CD4-positive, alpha-beta memory T cell (primary cell): ENCODE measurements at regions of chr2 and their contacts with region 1.

Region 1: GRCh38 chr2:201451292-201452057 is at the starts of genes STRADB and TRAK2:
- DNase-seq: peak; percentile 93 to 98 (median 95)
- H3K4me3 ChIP-seq: peak within 1 kb of the TSS; percentile 38 to 93
- H3K4me3 Mint-ChIP-seq: peak within 1 kb of the TSS; percentile 94 to 99 (median 98)
- H3K27ac ChIP-seq: peak within 1 kb of the TSS; percentile 74
- H3K27ac Mint-ChIP-seq: peak within 1 kb of the TSS; percentile 95 to 98 (median 97)
- H3K4me1 ChIP-seq: peaks cover 49% of the 10 kb centered on the region
- H3K4me1 Mint-ChIP-seq: peaks cover 29 to 52% (median 41%) of the 10 kb centered on the region in 4 donors
- H3K27me3 ChIP-seq: no peaks in the 10 kb centered on the region
- H3K27me3 Mint-ChIP-seq: no peaks in the 10 kb centered on the region
- total RNA-seq, gene STRADB: 17.3 to 20.9 TPM
- total RNA-seq, gene TRAK2: 46.8 to 47.3 TPM

Region 2: GRCh38 chr2:200509612-200510433 is 941.7 kb before region 1 on chr2 and contains the start of gene KCTD18:
- CTCF ChIA-PET with region 1: no interaction called
- POLR2A ChIA-PET with region 1: no interaction called
- intact Hi-C with region 1: loop called (anchors 10 kb)
- DNase-seq: peak; percentile 85 to 90 (median 87)
- H3K4me3 ChIP-seq: peak within 1 kb of the TSS; percentile 81
- H3K4me3 Mint-ChIP-seq: peak within 1 kb of the TSS; percentile 91 to 98 (median 93)
- H3K27ac ChIP-seq: peak within 1 kb of the TSS; percentile 73
- H3K27ac Mint-ChIP-seq: peak within 1 kb of the TSS; percentile 94 to 98 (median 96)
- H3K4me1 ChIP-seq: peaks cover 29% of the 10 kb centered on the region
- H3K4me1 Mint-ChIP-seq: peaks cover 30 to 43% (median 32%) of the 10 kb centered on the region in 4 donors
- H3K27me3 ChIP-seq: no peaks in the 10 kb centered on the region
- H3K27me3 Mint-ChIP-seq: no peaks in the 10 kb centered on the region
- total RNA-seq, gene KCTD18: 19.2 to 21.1 TPM

Region 3: DNA sequence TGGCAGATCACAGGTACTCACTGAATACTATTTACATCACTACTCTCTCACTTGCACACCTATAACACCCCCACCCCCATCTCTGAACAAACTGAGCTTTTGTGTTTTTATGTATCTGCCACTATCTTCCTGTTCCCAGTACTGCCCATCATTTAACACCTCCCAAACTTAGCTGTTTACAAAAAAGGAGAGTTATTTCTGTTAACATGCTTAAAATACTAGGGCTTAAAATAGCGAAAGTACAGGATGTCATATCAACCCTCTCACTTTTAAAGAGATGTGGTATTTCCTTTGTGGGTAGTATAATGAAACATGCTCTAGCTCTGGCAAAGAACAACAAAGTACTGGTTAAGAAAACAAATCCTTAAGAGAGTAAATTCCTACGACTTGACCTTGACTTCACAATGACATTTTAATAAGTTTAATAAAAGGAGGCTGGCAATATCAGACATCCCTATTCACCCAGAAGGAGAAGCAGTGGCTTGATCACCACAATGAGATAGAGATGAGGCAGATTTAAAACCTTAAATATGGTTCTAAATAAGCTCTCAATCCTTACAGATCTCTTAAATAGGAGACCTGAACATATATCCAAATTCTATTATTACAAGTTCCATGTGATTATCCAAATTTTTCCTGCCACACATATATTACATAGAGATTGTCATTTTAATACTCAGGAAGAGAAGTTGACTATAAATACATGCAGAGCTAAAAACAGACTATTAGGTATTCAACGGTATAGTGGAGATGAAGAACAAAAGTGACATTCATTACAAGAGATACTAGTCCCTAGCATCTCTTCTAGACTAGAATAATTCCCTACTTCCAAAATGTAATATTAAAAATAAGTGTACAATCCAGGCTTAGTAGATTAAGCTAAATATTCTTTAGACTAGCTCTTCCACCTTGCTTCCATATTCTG is 37.1 kb before region 1 on chr2:
- CTCF ChIA-PET with region 1: interaction called, 4 read pairs
- POLR2A ChIA-PET with region 1: interaction called, 40 read pairs
- intact Hi-C with region 1: loop called (anchors 1 kb)
- DNase-seq: peak in 4 of 5 donors; percentile 28 to 43 (median 38)
- H3K4me3 ChIP-seq: peak overlapping the region; percentile 11 to 29
- H3K4me3 Mint-ChIP-seq: no peak overlapping the region
- H3K27ac ChIP-seq: no peak overlapping the region
- H3K27ac Mint-ChIP-seq: no peak overlapping the region
- H3K4me1 ChIP-seq: peaks cover 50% of the 10 kb centered on the region
- H3K4me1 Mint-ChIP-seq: peaks cover 13 to 30% (median 18%) of the 10 kb centered on the region in 4 donors
- H3K27me3 ChIP-seq: no peaks in the 10 kb centered on the region
- H3K27me3 Mint-ChIP-seq: no peaks in the 10 kb centered on the region

Region 4: GRCh38 chr2:201432038-201432620 is 19.3 kb before region 1 on chr2:
- CTCF ChIA-PET with region 1: interaction called, 7 read pairs
- POLR2A ChIA-PET with region 1: interaction called, 154 read pairs
- intact Hi-C with region 1: loop called (anchors 1 kb)
- DNase-seq: peak in 4 of 5 donors; percentile 33 to 46 (median 42)
- H3K4me3 ChIP-seq: no peak overlapping the region
- H3K4me3 Mint-ChIP-seq: peak overlapping the region in 6 of 8 donors; percentile 7 to 83 (median 54)
- H3K27ac ChIP-seq: peak overlapping the region; percentile 42
- H3K27ac Mint-ChIP-seq: peak overlapping the region; percentile 43 to 94 (median 90)
- H3K4me1 ChIP-seq: peaks cover 52% of the 10 kb centered on the region
- H3K4me1 Mint-ChIP-seq: peaks cover 44 to 77% (median 61%) of the 10 kb centered on the region in 4 donors
- H3K27me3 ChIP-seq: no peaks in the 10 kb centered on the region
- H3K27me3 Mint-ChIP-seq: no peaks in the 10 kb centered on the region

Region 5: GRCh38 chr2:201642579-201643215 is 191.2 kb after region 1 on chr2:
- CTCF ChIA-PET with region 1: interaction called, 3 read pairs
- POLR2A ChIA-PET with region 1: interaction called, 29 read pairs
- intact Hi-C with region 1: loop called (anchors 1 kb)
- DNase-seq: peak; percentile 83 to 91 (median 89)
- H3K4me3 ChIP-seq: peak overlapping the region; percentile 92 to 97
- H3K4me3 Mint-ChIP-seq: peak overlapping the region; percentile 89 to 99 (median 96)
- H3K27ac ChIP-seq: peak overlapping the region; percentile 83
- H3K27ac Mint-ChIP-seq: peak overlapping the region; percentile 95 to 100 (median 96)
- H3K4me1 ChIP-seq: no peaks in the 10 kb centered on the region
- H3K4me1 Mint-ChIP-seq: peaks cover 7 to 23% (median 7%) of the 10 kb centered on the region in 4 donors
- H3K27me3 ChIP-seq: no peaks in the 10 kb centered on the region
- H3K27me3 Mint-ChIP-seq: no peaks in the 10 kb centered on the region

Region 6: GRCh38 chr2:202911512-202912341 is 1460.3 kb after region 1 on chr2 and contains the starts of genes CARF and WDR12:
- CTCF ChIA-PET with region 1: no interaction called
- POLR2A ChIA-PET with region 1: no interaction called
- intact Hi-C with region 1: loop called (anchors 5 kb)
- DNase-seq: peak; percentile 92
- H3K4me3 ChIP-seq: peak within 1 kb of the TSS; percentile 94 to 96
- H3K4me3 Mint-ChIP-seq: peak within 1 kb of the TSS; percentile 92 to 99 (median 98)
- H3K27ac ChIP-seq: peak within 1 kb of the TSS; percentile 74
- H3K27ac Mint-ChIP-seq: peak within 1 kb of the TSS; percentile 93 to 99 (median 98)
- H3K4me1 ChIP-seq: peaks cover 15% of the 10 kb centered on the region
- H3K4me1 Mint-ChIP-seq: peaks cover 16 to 48% (median 32%) of the 10 kb centered on the region in 4 donors
- H3K27me3 ChIP-seq: no peaks in the 10 kb centered on the region
- H3K27me3 Mint-ChIP-seq: no peaks in the 10 kb centered on the region
- total RNA-seq, gene CARF: 24.4 to 27.6 TPM
- total RNA-seq, gene WDR12: 21.3 to 25.0 TPM